MCF 10A (cell line): ENCODE measurements at regions of chr1 and their contacts with region 1.

Region 1: GRCh38 chr1:167774710-167775109 is 52.9 kb downstream of the MPZL1 start:
- DNase-seq: no peak
- H3K4me3 Mint-ChIP-seq: no peak overlapping the region
- H3K27ac Mint-ChIP-seq: peak overlapping the region; percentile 0
- H3K4me1 Mint-ChIP-seq: peaks cover 25% of the 10 kb centered on the region
- H3K27me3 Mint-ChIP-seq: no peaks in the 10 kb centered on the region
- CTCF ChIP-seq: no peak

Region 2: DNA sequence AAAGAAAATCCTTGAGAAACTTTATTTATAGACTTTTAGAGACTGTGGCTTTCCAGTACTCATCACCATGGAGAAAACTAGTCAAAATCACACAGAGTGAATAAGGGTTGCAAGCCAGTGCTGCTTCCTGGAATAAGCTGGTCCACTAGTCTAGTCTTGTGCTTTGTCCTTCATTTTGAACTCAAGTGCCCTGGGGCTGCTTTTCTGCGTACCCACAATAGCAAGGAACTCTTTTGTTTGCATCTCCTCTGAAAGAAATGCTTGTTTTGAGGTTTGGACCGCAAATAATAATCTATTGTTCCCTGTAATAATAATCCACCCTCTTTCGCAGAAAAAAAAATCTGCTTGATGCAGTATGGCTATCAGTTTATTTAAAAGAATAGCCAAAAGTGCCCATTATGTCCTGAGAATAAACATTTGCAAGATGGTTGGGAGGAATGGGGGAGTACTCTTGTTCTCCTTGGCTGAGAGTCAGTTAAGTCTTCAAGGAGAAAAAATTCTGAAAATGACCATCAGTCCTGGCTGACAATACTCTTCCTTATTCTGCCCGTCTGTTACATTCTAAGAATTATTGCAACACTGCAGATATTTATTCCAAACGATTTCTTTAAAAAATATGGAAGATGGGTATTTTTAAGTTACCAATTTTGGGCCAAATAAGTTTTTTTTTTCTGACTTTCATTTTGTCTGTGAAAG is 11.0 kb before region 1 on chr1:
- CTCF ChIA-PET with region 1: interaction called, 3 read pairs
- POLR2A ChIA-PET with region 1: interaction called, 19 read pairs
- intact Hi-C with region 1: no loop called
- DNase-seq: peak; percentile 45
- H3K4me3 Mint-ChIP-seq: no peak overlapping the region
- H3K27ac Mint-ChIP-seq: no peak overlapping the region
- H3K4me1 Mint-ChIP-seq: peaks cover 30% of the 10 kb centered on the region
- H3K27me3 Mint-ChIP-seq: no peaks in the 10 kb centered on the region
- CTCF ChIP-seq: no peak